Stomach (tissue), 19 donors: ENCODE measurements at regions of chr13 and their contacts with region 1.

Region 1: DNA sequence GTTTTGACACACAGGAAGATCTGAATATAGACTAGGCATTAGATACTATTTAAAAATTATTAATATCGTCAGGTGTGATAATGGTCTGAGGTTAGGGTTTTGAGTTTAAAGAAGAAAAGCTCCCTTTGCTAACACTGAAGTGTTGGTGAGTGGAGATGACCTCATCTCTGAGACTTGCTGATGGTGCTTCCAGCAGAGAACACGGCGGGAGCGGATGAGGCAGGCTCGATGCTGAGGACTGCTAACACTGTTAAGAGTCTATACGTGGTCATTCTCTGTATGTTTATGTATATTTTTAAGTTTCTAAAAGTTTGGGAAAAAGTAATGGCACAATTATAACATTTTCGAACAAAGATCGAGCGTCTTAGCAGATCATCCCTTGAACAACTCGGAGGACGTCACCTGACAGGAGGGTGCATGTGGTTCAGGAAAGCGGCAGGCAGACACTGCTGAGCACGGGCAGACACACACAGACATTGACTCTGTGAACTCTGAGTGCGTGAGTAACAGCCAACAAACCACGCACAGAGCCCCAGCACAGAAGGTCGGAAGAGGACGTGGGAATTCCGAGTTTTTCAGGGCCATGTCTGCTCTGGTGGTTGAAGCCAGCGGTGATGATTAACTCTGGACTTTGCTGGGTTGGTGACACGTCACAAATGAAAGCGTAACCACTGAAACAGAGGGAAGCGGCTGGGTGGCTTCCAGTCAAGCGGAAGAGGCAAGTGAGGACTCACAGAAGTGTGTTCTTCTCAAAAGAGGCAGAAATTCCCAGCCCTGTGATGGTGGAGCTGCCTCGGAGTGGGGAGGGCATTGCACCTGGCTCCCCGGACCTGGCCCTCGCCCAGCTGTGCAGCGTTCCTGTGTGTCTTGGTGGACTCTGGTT is 91.9 kb upstream of the TEX29 start:
- DNase-seq: no peak
- H3K4me3 ChIP-seq: no peak overlapping the region
- H3K27ac ChIP-seq: no peak overlapping the region
- H3K4me1 ChIP-seq: peaks cover 0 to 15% (median 6%) of the 10 kb centered on the region in 4 donors
- H3K27me3 ChIP-seq: no peaks in the 10 kb centered on the region
- CTCF ChIP-seq: no peak
- EP300 ChIP-seq: no peak
- POLR2A ChIP-seq: no peak

Region 2: GRCh38 chr13:111153279-111153976 is 75.1 kb before region 1 on chr13:
- intact Hi-C with region 1: loop called (anchors 10 kb)
- DNase-seq: peak; percentile 92 to 98
- H3K4me3 ChIP-seq: peak overlapping the region; percentile 84 to 97 (median 87)
- H3K27ac ChIP-seq: peak overlapping the region; percentile 97 to 99 (median 98)
- H3K4me1 ChIP-seq: peaks cover 15 to 52% (median 44%) of the 10 kb centered on the region in 4 donors
- H3K27me3 ChIP-seq: no peaks in the 10 kb centered on the region
- CTCF ChIP-seq: peak in 1 of 7 experiments; percentile 19
- EP300 ChIP-seq: no peak
- POLR2A ChIP-seq: peak in 2 of 4 donors; percentile 44 to 75

Region 3: GRCh38 chr13:111165241-111166010 is 63.1 kb before region 1 on chr13:
- intact Hi-C with region 1: no loop called
- DNase-seq: no peak
- H3K4me3 ChIP-seq: no peak overlapping the region
- H3K27ac ChIP-seq: no peak overlapping the region
- H3K4me1 ChIP-seq: peaks cover 14 to 63% (median 38%) of the 10 kb centered on the region in 4 donors
- H3K27me3 ChIP-seq: no peaks in the 10 kb centered on the region
- CTCF ChIP-seq: no peak
- EP300 ChIP-seq: no peak
- POLR2A ChIP-seq: no peak